ENCODE measurements at regions of chrX and their contacts with region 1.

Region 1: DNA sequence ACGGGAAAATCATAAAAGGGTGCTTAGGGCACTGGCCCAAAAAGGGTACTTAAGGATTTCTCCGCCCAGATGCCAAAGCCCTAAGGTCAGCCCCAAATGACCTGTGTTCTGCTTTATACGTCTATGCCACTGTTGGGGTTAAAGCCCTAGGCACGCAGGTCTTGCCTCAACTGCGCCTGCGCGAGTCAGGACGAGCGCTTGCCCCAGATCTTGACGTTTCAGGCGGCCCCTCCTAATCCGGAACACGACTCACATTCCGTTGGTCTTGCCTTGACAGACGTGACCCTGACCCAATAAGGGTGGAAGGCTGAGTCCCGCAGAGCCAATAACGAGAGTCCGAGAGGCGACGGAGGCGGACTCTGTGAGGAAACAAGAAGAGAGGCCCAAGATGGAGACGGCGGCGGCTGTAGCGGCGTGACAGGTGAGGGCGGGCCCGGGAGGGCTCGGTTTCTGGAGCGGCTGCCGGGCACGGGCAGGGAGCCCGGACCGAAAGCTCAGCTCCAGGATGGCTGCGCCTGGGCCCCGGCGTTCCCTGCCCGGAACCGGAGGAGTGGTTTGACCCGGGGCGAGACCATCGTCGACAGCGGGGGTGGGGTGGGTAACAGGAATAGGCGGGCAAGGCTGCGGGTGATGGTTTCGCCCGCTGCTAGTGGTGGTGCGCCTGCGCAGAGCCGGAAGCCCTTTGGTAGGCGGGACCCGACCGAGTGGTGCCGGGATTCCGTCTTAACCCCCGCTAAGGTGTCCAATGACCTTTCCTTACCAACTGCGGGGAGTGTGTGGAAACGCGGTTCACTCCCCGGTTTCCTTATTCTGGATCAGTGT is at the start of gene ARAF:
- DNase-seq: peak; percentile 96
- ATAC-seq: peak; percentile 91
- H3K4me3 Mint-ChIP-seq: peak within 1 kb of the TSS; percentile 89
- H3K27ac Mint-ChIP-seq: peak within 1 kb of the TSS; percentile 94
- H3K4me1 Mint-ChIP-seq: peaks cover 37% of the 10 kb centered on the region
- H3K27me3 Mint-ChIP-seq: no peaks in the 10 kb centered on the region
- total RNA-seq, gene ARAF: 58.8 to 59.2 TPM

Region 2: GRCh38 chrX:47144626-47145394 is 416.2 kb before region 1 on chrX and contains the starts of genes NDUFB11 and RBM10:
- CTCF ChIA-PET with region 1: no interaction called
- POLR2A ChIA-PET with region 1: no interaction called
- intact Hi-C with region 1: loop called in 1 of 2 experiments (anchors 1 kb)
- DNase-seq: peak; percentile 94
- ATAC-seq: peak; percentile 93
- H3K4me3 Mint-ChIP-seq: peak within 1 kb of the TSS; percentile 98
- H3K27ac Mint-ChIP-seq: peak within 1 kb of the TSS; percentile 100
- H3K4me1 Mint-ChIP-seq: peaks cover 24% of the 10 kb centered on the region
- H3K27me3 Mint-ChIP-seq: no peaks in the 10 kb centered on the region
- total RNA-seq, gene NDUFB11: 89.9 to 90.8 TPM
- total RNA-seq, gene RBM10: 63.8 to 72.1 TPM

Region 3: GRCh38 chrX:47581731-47582647 is 20.9 kb after region 1 on chrX and contains the start of gene TIMP1:
- CTCF ChIA-PET with region 1: no interaction called
- POLR2A ChIA-PET with region 1: no interaction called
- intact Hi-C with region 1: loop called (anchors 1 kb)
- DNase-seq: peak; percentile 90
- ATAC-seq: peak; percentile 86
- H3K4me3 Mint-ChIP-seq: peak within 1 kb of the TSS; percentile 46
- H3K27ac Mint-ChIP-seq: peak within 1 kb of the TSS; percentile 81
- H3K4me1 Mint-ChIP-seq: peaks cover 50% of the 10 kb centered on the region
- H3K27me3 Mint-ChIP-seq: peaks cover 3% of the 10 kb centered on the region
- total RNA-seq, gene TIMP1: 40.3 to 48.4 TPM

Region 4: DNA sequence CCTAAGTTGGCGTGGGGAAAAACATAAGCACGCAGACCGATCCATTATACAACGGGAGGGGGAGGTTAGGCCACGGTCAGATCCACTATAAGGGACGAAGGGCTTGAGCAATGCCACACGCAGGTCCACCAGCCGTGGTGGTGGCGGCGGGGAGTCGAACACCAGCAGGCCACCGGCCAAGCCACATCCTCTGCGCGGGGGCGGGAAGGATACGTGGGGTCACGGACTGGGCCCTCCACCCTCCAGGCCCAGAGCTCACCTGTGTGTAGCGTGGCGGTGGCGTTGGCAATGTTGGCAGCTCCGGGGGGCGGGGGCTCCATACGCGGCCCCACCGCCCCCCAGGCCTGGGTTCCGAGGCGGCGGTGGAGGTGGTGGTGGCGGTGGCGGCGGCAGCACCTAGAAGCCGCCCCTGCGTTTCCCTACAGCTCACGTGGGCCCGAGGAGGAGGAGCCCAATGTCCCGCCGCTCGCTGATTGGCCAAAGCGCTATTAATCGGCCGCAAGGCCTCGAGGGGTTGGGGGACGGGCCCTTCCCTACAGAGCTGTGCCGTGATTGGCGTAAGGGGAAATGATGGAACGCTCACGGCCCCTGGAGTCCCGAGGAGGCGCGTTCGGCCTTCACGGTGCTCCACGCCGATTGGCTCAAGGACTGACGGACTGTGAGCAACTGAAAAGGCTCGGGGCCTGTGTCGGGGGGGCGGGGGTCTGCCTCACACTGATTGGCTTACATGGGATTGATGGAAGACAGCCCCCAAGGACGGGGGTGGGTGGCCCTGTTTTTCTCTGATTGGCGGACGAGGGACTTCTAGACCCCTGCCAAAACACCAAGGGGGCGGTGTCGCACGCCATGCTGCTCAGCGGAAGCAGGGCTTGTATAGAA is 89.4 kb after region 1 on chrX and contains the start of gene ELK1:
- CTCF ChIA-PET with region 1: interaction called, 4 read pairs
- POLR2A ChIA-PET with region 1: no interaction called
- intact Hi-C with region 1: loop called (anchors 2 to 5 kb)
- DNase-seq: peak; percentile 93
- ATAC-seq: peak; percentile 95
- H3K4me3 Mint-ChIP-seq: peak within 1 kb of the TSS; percentile 92
- H3K27ac Mint-ChIP-seq: peak within 1 kb of the TSS; percentile 97
- H3K4me1 Mint-ChIP-seq: peaks cover 44% of the 10 kb centered on the region
- H3K27me3 Mint-ChIP-seq: no peaks in the 10 kb centered on the region
- total RNA-seq, gene ELK1: 96.8 to 117 TPM

Region 5: GRCh38 chrX:47751670-47752069 is 190.6 kb after region 1 on chrX:
- CTCF ChIA-PET with region 1: interaction called, 4 read pairs
- POLR2A ChIA-PET with region 1: no interaction called
- intact Hi-C with region 1: loop called (anchors 1 to 5 kb)
- DNase-seq: peak; percentile 67
- ATAC-seq: peak; percentile 36
- H3K4me3 Mint-ChIP-seq: no peak overlapping the region
- H3K27ac Mint-ChIP-seq: no peak overlapping the region
- H3K4me1 Mint-ChIP-seq: no peaks in the 10 kb centered on the region
- H3K27me3 Mint-ChIP-seq: peaks cover 4% of the 10 kb centered on the region

Region 6: GRCh38 chrX:47933946-47934345 is 372.9 kb after region 1 on chrX:
- CTCF ChIA-PET with region 1: no interaction called
- POLR2A ChIA-PET with region 1: no interaction called
- intact Hi-C with region 1: no loop called
- DNase-seq: no peak
- ATAC-seq: no peak
- H3K4me3 Mint-ChIP-seq: no peak overlapping the region
- H3K27ac Mint-ChIP-seq: no peak overlapping the region
- H3K4me1 Mint-ChIP-seq: peaks cover 8% of the 10 kb centered on the region
- H3K27me3 Mint-ChIP-seq: no peaks in the 10 kb centered on the region

Region 7: GRCh38 chrX:48539345-48540027 is 978.4 kb after region 1 on chrX and contains the start of gene TBC1D25:
- CTCF ChIA-PET with region 1: no interaction called
- POLR2A ChIA-PET with region 1: no interaction called
- intact Hi-C with region 1: loop called in 1 of 2 experiments (anchors 2 kb)
- DNase-seq: peak; percentile 98
- ATAC-seq: peak; percentile 80
- H3K4me3 Mint-ChIP-seq: peak within 1 kb of the TSS; percentile 87
- H3K27ac Mint-ChIP-seq: peak within 1 kb of the TSS; percentile 89
- H3K4me1 Mint-ChIP-seq: peaks cover 15% of the 10 kb centered on the region
- H3K27me3 Mint-ChIP-seq: no peaks in the 10 kb centered on the region
- total RNA-seq, gene TBC1D25: 13.2 to 15.2 TPM